Activated naive CD4-positive, alpha-beta T cell treated with anti-CD3 and anti-CD28 coated beads for 36 hours (primary cell): ENCODE measurements at regions of chr21 and their contacts with region 1.

Region 1: GRCh38 chr21:36156339-36156814 is 247 bp upstream of the DOP1B start:
- DNase-seq: peak; percentile 100
- H3K4me3 Mint-ChIP-seq: peak overlapping the region; percentile 80
- H3K27ac Mint-ChIP-seq: no peak overlapping the region
- H3K4me1 Mint-ChIP-seq: peaks cover 13% of the 10 kb centered on the region
- H3K27me3 Mint-ChIP-seq: no peaks in the 10 kb centered on the region

Region 2: DNA sequence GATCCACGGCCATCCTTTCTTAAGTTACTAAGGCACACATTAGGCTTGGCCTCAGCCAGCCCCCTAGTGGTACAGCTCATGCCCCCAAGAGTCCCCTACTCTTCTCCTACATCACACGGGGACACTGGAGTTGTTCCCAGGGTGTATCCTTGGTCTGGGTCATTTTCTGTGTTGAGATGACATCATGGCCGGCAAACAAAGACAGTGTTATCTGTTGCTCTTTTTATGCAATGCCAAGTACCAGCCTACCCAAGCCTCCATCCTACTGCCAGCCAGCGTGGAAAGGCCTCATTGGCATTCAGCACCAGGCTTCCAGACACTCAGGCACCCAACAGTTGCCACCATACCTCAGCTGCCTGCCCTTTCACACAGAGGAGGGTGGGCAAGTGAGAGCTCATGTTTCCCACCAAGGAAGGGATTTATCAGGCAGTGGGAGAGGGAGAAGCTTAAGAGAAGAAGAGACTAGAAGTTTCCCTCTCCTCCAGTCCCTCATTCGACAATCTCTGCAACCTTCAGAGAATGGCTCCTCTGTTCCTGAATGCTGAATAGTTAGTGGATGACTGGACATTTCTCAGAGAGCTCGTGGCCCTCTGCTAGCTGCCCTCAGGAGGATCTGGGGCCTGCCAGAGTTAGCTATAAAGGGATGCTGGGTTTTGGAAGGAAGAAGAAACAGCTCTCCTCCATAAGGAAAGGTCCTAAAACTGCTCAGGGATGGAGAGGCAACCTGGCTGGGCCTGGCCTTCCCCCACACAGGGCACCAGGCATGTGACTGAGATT is 68.8 kb before region 1 on chr21:
- CTCF ChIA-PET with region 1: no interaction called
- intact Hi-C with region 1: no loop called
- DNase-seq: no peak
- H3K4me3 Mint-ChIP-seq: no peak overlapping the region
- H3K27ac Mint-ChIP-seq: no peak overlapping the region
- H3K4me1 Mint-ChIP-seq: peaks cover 2% of the 10 kb centered on the region
- H3K27me3 Mint-ChIP-seq: no peaks in the 10 kb centered on the region

Region 3: GRCh38 chr21:36135391-36136102 is 20.8 kb before region 1 on chr21:
- CTCF ChIA-PET with region 1: interaction called, 5 read pairs
- intact Hi-C with region 1: loop called (anchors 1 kb)
- DNase-seq: peak; percentile 79
- H3K4me3 Mint-ChIP-seq: peak overlapping the region; percentile 91
- H3K27ac Mint-ChIP-seq: peak overlapping the region; percentile 79
- H3K4me1 Mint-ChIP-seq: peaks cover 17% of the 10 kb centered on the region
- H3K27me3 Mint-ChIP-seq: no peaks in the 10 kb centered on the region

Region 4: GRCh38 chr21:36175771-36176565 is 19.6 kb after region 1 on chr21:
- CTCF ChIA-PET with region 1: interaction called, 6 read pairs
- intact Hi-C with region 1: loop called (anchors 1 kb)
- DNase-seq: no peak
- H3K4me3 Mint-ChIP-seq: no peak overlapping the region
- H3K27ac Mint-ChIP-seq: no peak overlapping the region
- H3K4me1 Mint-ChIP-seq: peaks cover 10% of the 10 kb centered on the region
- H3K27me3 Mint-ChIP-seq: no peaks in the 10 kb centered on the region

Region 5: GRCh38 chr21:36288651-36289243 is 132.4 kb after region 1 on chr21:
- CTCF ChIA-PET with region 1: no interaction called
- intact Hi-C with region 1: loop called (anchors 1 kb)
- DNase-seq: no peak
- H3K4me3 Mint-ChIP-seq: peak overlapping the region; percentile 48
- H3K27ac Mint-ChIP-seq: peak overlapping the region; percentile 91
- H3K4me1 Mint-ChIP-seq: peaks cover 24% of the 10 kb centered on the region
- H3K27me3 Mint-ChIP-seq: no peaks in the 10 kb centered on the region

Region 6: DNA sequence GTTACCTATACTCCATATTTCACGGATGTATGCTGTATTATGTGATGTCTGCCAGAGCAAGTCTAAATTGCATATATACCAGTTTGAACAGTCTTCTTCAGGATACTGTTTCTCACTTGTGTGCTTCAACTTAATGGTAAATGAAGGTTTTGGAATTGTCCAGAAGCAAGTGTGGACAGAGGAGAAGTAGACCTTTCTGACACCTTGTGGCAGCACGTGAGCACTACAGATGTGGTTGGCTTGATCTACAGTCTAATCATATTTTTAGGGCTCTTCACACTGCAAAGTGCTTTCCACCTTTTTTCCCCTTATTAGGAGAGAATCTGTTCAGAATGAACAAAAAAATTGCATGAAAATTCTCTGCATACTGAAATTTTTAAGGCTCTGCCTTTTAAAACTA is 174.5 kb after region 1 on chr21:
- CTCF ChIA-PET with region 1: interaction called, 15 read pairs
- intact Hi-C with region 1: loop called (anchors 1 kb)
- DNase-seq: peak; percentile 71
- H3K4me3 Mint-ChIP-seq: no peak overlapping the region
- H3K27ac Mint-ChIP-seq: peak overlapping the region; percentile 77
- H3K4me1 Mint-ChIP-seq: peaks cover 54% of the 10 kb centered on the region
- H3K27me3 Mint-ChIP-seq: no peaks in the 10 kb centered on the region

Region 7: GRCh38 chr21:36989699-36990507 is 833.5 kb after region 1 on chr21:
- CTCF ChIA-PET with region 1: no interaction called
- intact Hi-C with region 1: loop called (anchors 1 kb)
- DNase-seq: peak; percentile 89
- H3K4me3 Mint-ChIP-seq: peak overlapping the region; percentile 80
- H3K27ac Mint-ChIP-seq: peak overlapping the region; percentile 65
- H3K4me1 Mint-ChIP-seq: peaks cover 38% of the 10 kb centered on the region
- H3K27me3 Mint-ChIP-seq: no peaks in the 10 kb centered on the region